ENCODE measurements at regions of chr19 and their contacts with region 1.

Region 1: GRCh38 chr19:20039203-20039723 is at the start of gene ZNF682:
- DNase-seq: peak; percentile 87 to 97 (median 95)
- ATAC-seq: peak; percentile 99
- H3K4me3 ChIP-seq: peak within 1 kb of the TSS; percentile 71 to 72
- H3K4me3 Mint-ChIP-seq: peak within 1 kb of the TSS; percentile 98
- H3K27ac ChIP-seq: peak within 1 kb of the TSS; percentile 60 to 68
- H3K27ac Mint-ChIP-seq: peak within 1 kb of the TSS; percentile 96
- H3K4me1 ChIP-seq: peaks cover 13% of the 10 kb centered on the region
- H3K4me1 Mint-ChIP-seq: peaks cover 20% of the 10 kb centered on the region
- H3K27me3 ChIP-seq: no peaks in the 10 kb centered on the region
- H3K27me3 Mint-ChIP-seq: peaks cover 2% of the 10 kb centered on the region
- CTCF ChIP-seq: no peak
- total RNA-seq, gene ZNF682: 13.3 to 16.0 TPM

Region 2: GRCh38 chr19:19900729-19901444 is 138.4 kb before region 1 on chr19 and contains the start of gene ZNF93:
- CTCF ChIA-PET with region 1: no interaction called
- POLR2A ChIA-PET with region 1: no interaction called
- intact Hi-C with region 1: loop called in 1 of 2 experiments (anchors 5 kb)
- DNase-seq: peak; percentile 83 to 95 (median 91)
- ATAC-seq: peak; percentile 97
- H3K4me3 ChIP-seq: peak within 1 kb of the TSS; percentile 86 to 95
- H3K4me3 Mint-ChIP-seq: peak within 1 kb of the TSS; percentile 94
- H3K27ac ChIP-seq: peak within 1 kb of the TSS; percentile 46 to 75
- H3K27ac Mint-ChIP-seq: peak within 1 kb of the TSS; percentile 91
- H3K4me1 ChIP-seq: peaks cover 10% of the 10 kb centered on the region
- H3K4me1 Mint-ChIP-seq: peaks cover 38% of the 10 kb centered on the region
- H3K27me3 ChIP-seq: no peaks in the 10 kb centered on the region
- H3K27me3 Mint-ChIP-seq: no peaks in the 10 kb centered on the region
- CTCF ChIP-seq: no peak
- total RNA-seq, gene ZNF93: 5.9 to 6.8 TPM

Region 3: DNA sequence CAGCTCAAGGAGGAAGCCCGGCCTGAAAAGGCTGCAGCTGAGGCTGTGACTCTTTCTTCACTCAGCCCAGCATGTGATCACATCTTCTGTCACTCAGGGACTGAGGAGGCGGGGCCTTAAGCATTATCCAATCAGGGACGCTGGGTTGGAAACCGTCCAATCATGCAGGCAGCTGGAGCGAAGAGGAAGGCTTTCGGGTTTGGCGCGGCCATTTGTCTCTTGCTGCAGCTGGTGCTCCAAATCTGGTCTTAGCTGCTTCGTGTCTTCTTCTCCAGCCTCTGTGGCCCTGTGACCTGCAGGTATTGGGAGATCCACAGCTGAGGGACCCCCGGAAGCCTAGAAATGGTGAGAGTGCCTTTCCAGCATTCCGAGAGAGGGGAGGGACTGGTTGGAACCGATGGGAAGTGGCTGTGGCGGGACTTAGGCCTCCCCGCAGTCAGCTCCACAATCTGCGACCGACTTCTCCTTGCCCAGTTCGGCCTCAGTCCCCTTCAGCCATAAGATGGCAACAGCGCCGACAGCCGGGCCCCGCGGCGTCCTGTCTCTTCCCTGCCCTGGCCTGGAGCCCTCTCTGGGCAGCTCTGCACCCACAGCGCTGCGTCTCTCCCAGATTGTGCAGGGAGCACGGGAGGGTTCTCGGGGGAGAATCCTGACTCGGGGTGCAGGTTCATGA is 38.7 kb after region 1 on chr19 and contains the start of gene ZNF90:
- CTCF ChIA-PET with region 1: interaction called, 3 read pairs
- POLR2A ChIA-PET with region 1: interaction called, 3 read pairs
- intact Hi-C with region 1: loop called (anchors 1 kb)
- DNase-seq: peak; percentile 63 to 95 (median 84)
- ATAC-seq: peak; percentile 99
- H3K4me3 ChIP-seq: peak within 1 kb of the TSS; percentile 67 to 76
- H3K4me3 Mint-ChIP-seq: peak within 1 kb of the TSS; percentile 91
- H3K27ac ChIP-seq: no peak within 1 kb of the TSS
- H3K27ac Mint-ChIP-seq: no peak within 1 kb of the TSS
- H3K4me1 ChIP-seq: peaks cover 10% of the 10 kb centered on the region
- H3K4me1 Mint-ChIP-seq: peaks cover 22% of the 10 kb centered on the region
- H3K27me3 ChIP-seq: no peaks in the 10 kb centered on the region
- H3K27me3 Mint-ChIP-seq: no peaks in the 10 kb centered on the region
- CTCF ChIP-seq: no peak
- total RNA-seq, gene ZNF90: 1.9 to 2.2 TPM

Region 4: GRCh38 chr19:20237761-20238623 is 198.7 kb after region 1 on chr19:
- CTCF ChIA-PET with region 1: no interaction called
- POLR2A ChIA-PET with region 1: interaction called, 9 read pairs
- intact Hi-C with region 1: loop called (anchors 1 to 5 kb)
- DNase-seq: peak; percentile 74 to 92 (median 86)
- ATAC-seq: peak; percentile 97
- H3K4me3 ChIP-seq: peak overlapping the region; percentile 77 to 87
- H3K4me3 Mint-ChIP-seq: peak overlapping the region; percentile 98
- H3K27ac ChIP-seq: peak overlapping the region; percentile 50 to 56
- H3K27ac Mint-ChIP-seq: peak overlapping the region; percentile 91
- H3K4me1 ChIP-seq: peaks cover 6% of the 10 kb centered on the region
- H3K4me1 Mint-ChIP-seq: peaks cover 10% of the 10 kb centered on the region
- H3K27me3 ChIP-seq: no peaks in the 10 kb centered on the region
- H3K27me3 Mint-ChIP-seq: no peaks in the 10 kb centered on the region
- CTCF ChIP-seq: no peak

Region 5: GRCh38 chr19:20923077-20923871 is 884.0 kb after region 1 on chr19 and contains the start of gene ZNF85:
- CTCF ChIA-PET with region 1: no interaction called
- POLR2A ChIA-PET with region 1: no interaction called
- intact Hi-C with region 1: loop called in 1 of 2 experiments (anchors 5 kb)
- DNase-seq: peak; percentile 80 to 94 (median 90)
- ATAC-seq: peak; percentile 99
- H3K4me3 ChIP-seq: peak within 1 kb of the TSS; percentile 85 to 93
- H3K4me3 Mint-ChIP-seq: peak within 1 kb of the TSS; percentile 97
- H3K27ac ChIP-seq: peak within 1 kb of the TSS; percentile 82 to 88
- H3K27ac Mint-ChIP-seq: peak within 1 kb of the TSS; percentile 93
- H3K4me1 ChIP-seq: no peaks in the 10 kb centered on the region
- H3K4me1 Mint-ChIP-seq: peaks cover 23% of the 10 kb centered on the region
- H3K27me3 ChIP-seq: no peaks in the 10 kb centered on the region
- H3K27me3 Mint-ChIP-seq: no peaks in the 10 kb centered on the region
- CTCF ChIP-seq: no peak
- total RNA-seq, gene ZNF85: 3.7 to 4.9 TPM

Measured in CD8-positive, alpha-beta T cell (primary cell).